Activated T-helper 2 cell treated with anti-CD3 and anti-CD28 coated beads, Interferon-gamma antibody, Interleukin-2, Interleukin-4, amounts not matched to agents 10 μg/mL and 5 μg/mL and 100 μg/mL, durations not matched to agents 14 hours and 24 hours and 36 hours (primary cell): ENCODE measurements at regions of chr1 and their contacts with region 1.

Region 1: DNA sequence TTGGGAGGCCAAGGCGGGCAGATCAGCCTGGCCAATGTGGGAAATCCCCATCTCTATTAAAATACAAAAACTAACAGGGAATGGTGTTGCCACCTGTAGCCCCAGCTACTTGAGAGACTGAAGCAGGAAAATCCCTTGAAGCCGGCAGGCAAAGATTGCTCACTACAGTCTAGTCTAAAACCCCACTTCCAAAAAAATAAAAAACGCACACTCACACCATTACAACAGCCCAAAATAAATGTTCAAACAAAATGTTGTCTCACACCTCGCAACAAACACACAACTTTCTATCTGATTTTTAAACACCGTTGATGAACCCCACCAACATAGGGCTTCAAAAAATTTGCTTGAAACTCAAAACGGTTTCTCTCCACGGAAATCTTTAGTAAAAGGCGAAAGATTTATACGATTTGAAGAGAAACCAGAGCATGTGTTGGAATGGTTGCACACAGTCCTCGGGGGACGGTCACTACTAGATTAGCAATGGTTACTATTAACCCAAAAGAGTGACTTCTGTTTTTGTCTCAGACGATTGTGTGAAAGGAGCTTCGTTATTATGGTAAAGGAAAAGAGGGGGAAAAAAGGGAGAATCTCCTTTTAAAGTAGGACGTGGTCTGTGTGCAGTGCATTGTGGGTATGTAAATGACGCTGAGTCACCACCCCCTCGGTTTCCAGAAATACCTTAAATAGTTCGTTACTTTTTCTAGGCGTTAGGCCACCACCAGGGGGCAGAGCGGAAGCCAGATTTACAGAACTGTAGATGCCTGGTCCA is at the start of gene RNU5D-1:
- DNase-seq: peak; percentile 88
- H3K4me3 Mint-ChIP-seq: peak within 1 kb of the TSS; percentile 70
- H3K27ac Mint-ChIP-seq: peak within 1 kb of the TSS; percentile 100
- H3K4me1 Mint-ChIP-seq: peaks cover 33% of the 10 kb centered on the region
- H3K27me3 Mint-ChIP-seq: no peaks in the 10 kb centered on the region
- total RNA-seq, gene RNU5D-1: not detected in 2 replicates

Region 2: DNA sequence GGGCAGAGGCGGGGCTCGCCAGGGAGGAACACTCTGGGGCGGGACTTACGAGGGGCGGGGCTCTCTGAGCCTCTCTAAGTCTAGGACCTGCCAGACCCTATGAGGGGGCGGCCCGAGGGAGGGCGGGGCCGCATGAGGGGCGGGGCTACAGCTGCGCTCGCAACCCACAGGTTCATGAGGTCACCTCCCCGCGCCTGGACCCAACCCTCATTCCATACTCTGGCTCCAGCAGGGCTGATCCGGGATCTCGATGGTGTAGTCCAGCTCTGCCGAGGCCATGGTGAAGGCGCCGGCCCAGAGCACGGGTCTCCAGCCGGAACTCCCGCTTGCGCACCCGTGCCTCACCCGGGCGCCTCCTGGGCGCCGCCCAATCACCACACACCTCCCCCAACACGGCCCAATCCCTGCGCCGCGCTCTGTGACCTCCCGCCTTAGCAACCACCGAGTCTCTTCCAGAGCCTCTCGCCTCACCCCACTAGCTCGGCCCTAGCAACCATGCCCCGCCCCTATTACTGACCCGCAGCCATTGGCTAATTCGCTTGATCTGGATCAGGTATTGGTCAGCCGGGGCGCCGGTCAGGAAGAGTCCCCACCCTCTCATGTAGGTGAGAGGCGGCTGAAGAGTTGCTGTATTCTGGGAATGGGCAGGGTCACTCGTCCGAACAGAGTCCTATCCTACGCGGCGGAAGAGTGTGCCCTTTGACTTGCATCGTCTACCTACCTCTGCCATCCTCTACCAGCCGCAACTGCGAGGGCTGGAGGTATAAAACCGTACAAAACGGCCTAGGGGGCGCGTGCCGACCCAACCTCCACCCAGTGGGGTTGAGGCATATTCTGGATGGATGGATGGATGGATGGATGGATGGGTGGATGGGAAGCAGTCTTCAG is 56.6 kb before region 1 on chr1 and contains the starts of genes ARMH1 and TMEM53:
- intact Hi-C with region 1: loop called (anchors 2 kb)
- DNase-seq: peak; percentile 98
- H3K4me3 Mint-ChIP-seq: peak within 1 kb of the TSS; percentile 80
- H3K27ac Mint-ChIP-seq: peak within 1 kb of the TSS; percentile 86
- H3K4me1 Mint-ChIP-seq: peaks cover 26% of the 10 kb centered on the region
- H3K27me3 Mint-ChIP-seq: no peaks in the 10 kb centered on the region
- total RNA-seq, gene ARMH1: 139 and 157 TPM in 2 replicates
- total RNA-seq, gene TMEM53: 6.3 and 6.7 TPM in 2 replicates

Region 3: GRCh38 chr1:44714944-44715571 is 15.9 kb before region 1 on chr1:
- intact Hi-C with region 1: loop called (anchors 2 kb)
- DNase-seq: peak; percentile 62
- H3K4me3 Mint-ChIP-seq: peak overlapping the region; percentile 30
- H3K27ac Mint-ChIP-seq: peak overlapping the region; percentile 49
- H3K4me1 Mint-ChIP-seq: peaks cover 42% of the 10 kb centered on the region
- H3K27me3 Mint-ChIP-seq: peaks cover 13% of the 10 kb centered on the region

Region 4: DNA sequence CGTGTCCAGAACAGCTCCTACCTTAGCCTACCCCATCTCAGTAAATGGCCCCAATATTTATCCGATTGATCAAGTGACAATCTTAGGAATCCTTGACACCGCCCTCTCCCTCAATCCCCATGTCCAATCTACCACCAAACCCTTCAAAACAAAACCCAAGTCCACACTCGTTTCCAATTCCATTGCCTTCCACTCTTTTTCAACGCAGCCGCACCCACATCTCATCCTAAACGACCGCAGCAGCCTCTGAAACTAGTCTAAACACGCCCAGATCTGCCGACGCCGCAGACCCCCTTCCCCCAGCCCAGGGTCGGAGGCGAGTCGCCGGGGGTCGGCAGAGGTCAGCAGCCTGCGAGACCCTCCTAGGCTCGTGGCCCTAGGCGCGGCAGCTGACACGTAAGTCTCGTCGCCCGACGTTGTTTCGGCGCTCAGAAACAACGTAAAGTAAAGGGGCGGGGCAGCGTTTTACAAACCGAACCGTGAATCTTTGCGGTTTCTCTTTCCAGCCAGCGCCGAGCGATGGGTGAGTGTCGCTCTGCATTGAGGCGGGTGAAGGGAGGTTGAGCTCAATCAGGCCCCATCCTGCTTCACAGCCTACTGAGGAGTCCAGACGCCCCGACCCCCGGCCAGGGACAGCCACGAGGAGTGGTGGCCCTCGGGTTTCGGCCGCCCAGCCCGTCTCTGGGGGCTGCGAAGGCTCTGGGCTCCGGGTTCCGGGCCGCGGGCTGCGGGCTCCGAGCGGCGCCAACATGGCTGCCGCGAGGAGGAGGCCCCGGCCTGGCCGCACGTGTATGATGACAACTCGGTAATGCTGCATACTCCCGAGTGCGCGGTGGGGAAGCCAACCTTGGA is 44.4 kb after region 1 on chr1 and contains the start of gene RPS8:
- intact Hi-C with region 1: loop called (anchors 2 kb)
- DNase-seq: peak; percentile 86
- H3K4me3 Mint-ChIP-seq: peak within 1 kb of the TSS; percentile 88
- H3K27ac Mint-ChIP-seq: peak within 1 kb of the TSS; percentile 93
- H3K4me1 Mint-ChIP-seq: peaks cover 24% of the 10 kb centered on the region
- H3K27me3 Mint-ChIP-seq: no peaks in the 10 kb centered on the region
- total RNA-seq, gene RPS8: 2,328 and 2,356 TPM in 2 replicates

Region 5: DNA sequence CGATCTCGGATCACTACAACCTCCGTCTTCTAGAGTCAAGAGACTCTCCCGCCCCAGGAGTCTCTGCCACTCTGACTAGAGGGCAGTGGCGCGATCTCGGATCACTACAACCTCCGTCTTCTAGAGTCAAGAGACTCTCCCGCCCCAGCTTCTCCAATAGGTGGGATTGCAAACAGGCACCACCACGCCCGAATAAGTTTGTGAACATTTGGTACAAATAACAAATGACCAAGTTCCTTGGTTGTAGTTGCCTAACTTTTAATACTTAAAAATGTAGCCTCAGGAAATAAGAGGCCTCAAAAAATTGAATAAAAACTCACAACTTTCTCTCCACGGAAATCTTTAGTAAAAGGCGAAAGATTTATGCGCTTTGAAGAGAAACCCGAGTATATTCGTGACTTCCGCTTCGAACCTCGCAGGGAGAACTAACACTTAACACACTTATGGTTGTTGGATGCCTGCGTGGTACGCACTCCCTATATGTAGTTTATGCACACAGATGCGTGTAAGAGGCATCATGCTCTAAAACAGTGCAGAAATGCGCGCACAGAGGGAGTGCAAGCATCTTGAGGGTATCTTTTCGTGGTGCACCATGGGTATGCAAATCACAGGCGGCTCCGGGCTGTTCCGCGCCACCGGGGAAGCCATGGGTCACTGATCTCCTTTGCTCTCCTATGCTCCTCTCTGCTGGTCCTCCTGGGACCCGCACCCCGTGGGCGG is 88.8 kb after region 1 on chr1:
- intact Hi-C with region 1: loop called (anchors 1 kb)
- DNase-seq: peak; percentile 84
- H3K4me3 Mint-ChIP-seq: peak overlapping the region; percentile 88
- H3K27ac Mint-ChIP-seq: peak overlapping the region; percentile 98
- H3K4me1 Mint-ChIP-seq: peaks cover 35% of the 10 kb centered on the region
- H3K27me3 Mint-ChIP-seq: no peaks in the 10 kb centered on the region

Region 6: DNA sequence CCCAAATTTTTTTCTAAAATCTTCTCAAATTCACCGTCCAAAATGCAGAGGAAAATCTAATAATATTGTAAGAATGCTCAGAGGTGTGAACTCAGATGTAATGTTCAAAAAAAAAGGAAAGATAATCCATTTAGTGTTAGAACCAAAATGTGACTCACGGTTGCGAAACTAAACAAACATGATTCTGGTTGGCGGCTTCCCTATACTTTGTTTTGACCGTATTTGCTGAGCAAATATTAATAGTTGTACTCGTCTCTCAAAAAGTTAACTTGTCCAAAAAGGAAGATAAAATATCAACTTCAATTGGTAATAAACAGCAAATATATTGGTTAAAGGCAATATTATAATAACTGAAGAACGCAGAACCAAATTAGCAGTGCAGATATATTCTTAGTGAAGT is 441.1 kb after region 1 on chr1:
- intact Hi-C with region 1: no loop called
- DNase-seq: no peak
- H3K4me3 Mint-ChIP-seq: no peak overlapping the region
- H3K27ac Mint-ChIP-seq: no peak overlapping the region
- H3K4me1 Mint-ChIP-seq: no peaks in the 10 kb centered on the region
- H3K27me3 Mint-ChIP-seq: peaks cover 3% of the 10 kb centered on the region